Prostate gland (tissue), 2 donors: ENCODE measurements at regions of chr1 and their contacts with region 1.

Region 1: DNA sequence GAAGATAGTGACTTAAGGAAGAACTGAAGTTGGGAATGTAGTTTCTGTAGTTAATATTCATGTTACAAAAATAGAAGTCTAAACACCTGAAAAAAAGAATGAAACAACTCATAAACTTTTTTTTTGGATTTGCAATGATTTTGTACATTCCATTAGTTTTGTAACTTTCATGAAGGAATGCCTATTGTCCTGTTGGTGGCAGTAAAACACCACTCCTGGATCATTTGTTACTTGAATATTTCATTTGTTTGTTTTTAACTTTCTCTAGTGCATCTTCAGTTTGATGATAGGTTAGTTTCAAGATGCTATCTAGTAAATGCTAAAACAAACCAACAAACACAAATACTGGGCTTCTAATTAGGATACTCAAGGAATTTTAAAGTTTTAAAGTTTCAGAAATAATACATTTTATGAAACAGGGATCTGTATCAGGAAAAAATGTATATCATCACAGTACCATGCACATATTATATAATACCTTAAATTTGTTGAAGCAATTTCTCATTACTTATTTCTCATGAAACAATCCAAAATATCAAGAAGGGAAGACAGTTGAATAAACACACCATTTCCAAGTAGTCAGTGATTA is 229.7 kb upstream of the CACYBP start:
- DNase-seq: no peak
- H3K4me3 ChIP-seq: no peak overlapping the region
- H3K27ac ChIP-seq: no peak overlapping the region
- H3K4me1 ChIP-seq: no peaks in the 10 kb centered on the region
- H3K27me3 ChIP-seq: no peaks in the 10 kb centered on the region
- CTCF ChIP-seq: peak in 3 of 4 experiments; percentile 40 to 84 (median 78)
- POLR2A ChIP-seq: no peak

Region 2: DNA sequence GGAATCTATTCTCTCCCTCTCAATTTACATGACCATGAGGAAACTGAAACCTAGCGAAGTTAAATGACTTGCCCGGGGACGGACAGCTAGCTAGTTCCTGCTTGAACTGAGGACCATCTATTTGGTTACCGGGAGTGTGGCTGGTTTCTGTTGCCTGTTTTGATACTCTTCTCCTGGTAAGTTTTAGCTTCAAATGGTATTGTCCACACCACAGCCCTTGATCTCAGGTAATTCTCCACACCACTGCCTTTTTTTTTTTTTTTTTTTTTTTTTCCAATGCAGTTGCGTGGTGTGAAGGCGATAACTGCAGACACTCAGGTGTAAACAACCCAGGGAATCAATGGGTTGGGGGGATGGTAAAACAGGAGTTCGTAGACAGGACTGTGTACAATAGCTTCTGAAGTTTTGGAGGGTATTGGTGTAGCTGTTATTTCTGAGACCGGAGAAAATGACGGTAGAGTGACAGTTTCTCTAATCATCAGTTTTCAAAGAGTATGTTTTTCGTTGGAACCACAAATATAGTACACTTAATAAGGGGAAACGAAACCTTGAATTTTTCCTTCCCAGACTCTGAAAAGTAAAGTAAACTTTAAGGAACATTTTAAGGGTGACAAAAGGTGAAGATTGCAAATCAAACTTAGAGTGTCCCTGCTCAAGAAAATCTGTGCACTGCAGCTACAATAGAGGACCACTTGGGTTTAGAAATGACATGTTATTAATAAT is 104.4 kb after region 1 on chr1:
- intact Hi-C with region 1: no loop called
- DNase-seq: no peak
- H3K4me3 ChIP-seq: no peak overlapping the region
- H3K27ac ChIP-seq: no peak overlapping the region
- H3K4me1 ChIP-seq: no peaks in the 10 kb centered on the region
- H3K27me3 ChIP-seq: no peaks in the 10 kb centered on the region
- CTCF ChIP-seq: no peak
- POLR2A ChIP-seq: no peak

Region 3: GRCh38 chr1:174982971-174983689 is 213.1 kb after region 1 on chr1:
- intact Hi-C with region 1: loop called (anchors 5 kb)
- DNase-seq: no peak
- H3K4me3 ChIP-seq: no peak overlapping the region
- H3K27ac ChIP-seq: no peak overlapping the region
- H3K4me1 ChIP-seq: no peaks in the 10 kb centered on the region
- H3K27me3 ChIP-seq: no peaks in the 10 kb centered on the region
- CTCF ChIP-seq: peak in 3 of 4 experiments; percentile 58 to 70 (median 65)
- POLR2A ChIP-seq: no peak

Region 4: DNA sequence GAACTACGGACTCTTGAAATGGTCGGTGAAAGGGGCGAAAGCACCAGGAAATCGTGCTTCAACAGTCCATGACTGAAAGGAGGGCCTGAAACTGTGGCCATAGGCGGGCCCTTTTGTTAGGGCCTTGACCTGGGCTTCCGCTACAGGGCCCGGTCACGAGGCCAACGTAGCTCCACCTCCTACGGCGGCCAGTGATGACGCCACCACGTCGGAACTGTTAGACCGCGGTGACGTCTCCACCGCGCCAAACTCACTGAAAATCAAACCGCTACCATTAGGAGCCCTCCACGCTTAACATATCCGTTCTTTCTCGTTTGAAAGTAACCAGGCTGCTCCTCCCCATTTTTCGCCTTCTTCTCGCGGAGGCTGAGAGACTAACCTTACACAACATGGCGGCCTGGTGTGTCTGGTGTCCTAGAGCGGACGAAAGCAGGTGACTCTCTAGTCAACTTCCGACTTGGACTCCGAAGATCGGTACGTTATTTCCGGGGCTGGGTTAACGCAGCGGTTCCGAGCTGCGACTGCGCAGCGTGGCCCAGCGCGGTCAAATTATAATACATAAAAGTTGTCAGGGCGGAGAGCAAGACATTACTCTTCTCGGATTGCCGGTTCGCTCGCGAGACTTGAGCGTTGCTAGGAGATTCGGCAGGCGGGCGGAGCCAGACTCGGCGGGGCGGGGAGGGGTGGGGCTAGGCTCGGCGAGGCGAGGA is 229.3 kb after region 1 on chr1:
- intact Hi-C with region 1: loop called (anchors 5 kb)
- DNase-seq: peak; percentile 98
- H3K4me3 ChIP-seq: peak overlapping the region; percentile 55 to 87
- H3K27ac ChIP-seq: peak overlapping the region; percentile 95 to 97
- H3K4me1 ChIP-seq: no peaks in the 10 kb centered on the region
- H3K27me3 ChIP-seq: no peaks in the 10 kb centered on the region
- CTCF ChIP-seq: peak in 1 of 4 experiments; percentile 8
- POLR2A ChIP-seq: peak; percentile 92